H1 (cell line): ENCODE measurements at regions of chr16 and their contacts with region 1.

Region 1: GRCh38 chr16:2963065-2963722 is 881 bp upstream of the KREMEN2 start:
- DNase-seq: no peak
- H3K4me3 ChIP-seq: peak overlapping the region; percentile 39 to 80 (median 59)
- H3K27ac ChIP-seq: no peak overlapping the region; the same call in 1 of the 2 replicates
- H3K4me1 ChIP-seq: peaks cover 0 to 21% (median 12%) of the 10 kb centered on the region in 4 experiments; a peak in 5 of 7 replicates
- H3K27me3 ChIP-seq: peaks cover 15 to 25% (median 20%) of the 10 kb centered on the region in 4 experiments; a peak in 6 of 7 replicates
- CTCF ChIP-seq: no peak
- EP300 ChIP-seq: no peak
- POLR2A ChIP-seq: no peak
- RAD21 ChIP-seq: no peak

Region 2: GRCh38 chr16:2980227-2981086 is 17.3 kb after region 1 on chr16 and contains the start of gene PKMYT1:
- CTCF ChIA-PET with region 1: interaction called, 27 read pairs
- POLR2A ChIA-PET with region 1: interaction called, 128 read pairs
- DNase-seq: peak in 1 of 2 experiments; percentile 95
- H3K4me3 ChIP-seq: peak within 1 kb of the TSS; percentile 68 to 79 (median 73)
- H3K27ac ChIP-seq: peak within 1 kb of the TSS; percentile 91
- H3K4me1 ChIP-seq: peaks cover 3 to 23% (median 14%) of the 10 kb centered on the region in 4 experiments
- H3K27me3 ChIP-seq: no peaks in the 10 kb centered on the region; a peak in 1 of 7 replicates
- CTCF ChIP-seq: no peak
- EP300 ChIP-seq: no peak
- POLR2A ChIP-seq: peak in 1 of 2 experiments; percentile 79; a peak in 2 of 3 replicates
- RAD21 ChIP-seq: no peak
- total RNA-seq, gene PKMYT1: 74.7 and 83.6 TPM in 2 replicates

Region 3: DNA sequence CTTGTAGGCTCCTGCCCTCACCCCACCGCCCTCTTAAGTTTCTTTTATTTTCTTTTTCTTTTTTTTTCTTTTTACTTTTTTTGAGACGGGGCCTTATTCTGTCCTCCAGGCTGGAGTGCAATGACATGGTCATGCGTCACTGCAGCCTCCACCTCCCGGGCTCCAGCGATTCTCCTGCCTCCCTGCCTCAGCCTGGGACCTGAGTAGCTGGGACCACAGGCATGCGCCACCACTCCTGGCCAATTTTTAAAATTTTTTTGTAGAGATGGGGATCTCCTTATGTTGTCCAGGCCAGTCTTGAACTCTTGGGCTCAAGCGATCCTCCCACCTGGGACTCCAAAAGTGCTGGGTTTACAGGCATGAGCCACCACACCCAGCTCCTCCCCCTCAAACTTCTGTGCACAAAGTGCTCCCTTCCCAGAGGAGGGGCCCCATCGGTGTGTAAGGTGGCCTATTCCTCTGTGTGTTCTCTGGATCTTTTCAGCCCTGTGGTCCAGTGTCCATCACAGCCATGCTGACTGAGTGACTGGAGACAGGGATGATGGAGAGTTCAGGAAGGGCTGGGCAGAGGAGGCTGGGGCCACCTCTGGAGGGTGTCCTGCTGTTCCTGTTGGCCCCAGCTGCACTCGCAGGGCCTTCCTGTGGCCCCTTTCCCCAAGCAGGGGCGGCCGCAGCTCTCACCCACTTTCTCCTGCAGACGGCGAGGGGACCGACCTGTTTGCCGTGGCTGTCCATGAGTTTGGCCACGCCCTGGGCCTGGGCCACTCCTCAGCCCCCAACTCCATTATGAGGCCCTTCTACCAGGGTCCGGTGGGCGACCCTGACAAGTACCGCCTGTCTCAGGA is 93.4 kb after region 1 on chr16:
- CTCF ChIA-PET with region 1: no interaction called
- POLR2A ChIA-PET with region 1: no interaction called
- DNase-seq: no peak
- H3K4me3 ChIP-seq: no peak overlapping the region
- H3K27ac ChIP-seq: no peak overlapping the region
- H3K4me1 ChIP-seq: peaks cover 5 to 17% (median 6%) of the 10 kb centered on the region in 4 experiments; a peak in 6 of 7 replicates
- H3K27me3 ChIP-seq: no peaks in the 10 kb centered on the region; a peak in 1 of 7 replicates
- CTCF ChIP-seq: no peak
- EP300 ChIP-seq: no peak
- POLR2A ChIP-seq: no peak
- RAD21 ChIP-seq: no peak